ENCODE measurements at regions of chr2 and their contacts with region 1.

Region 1: GRCh38 chr2:84022810-84023431 is 436.2 kb downstream of the SUCLG1 start:
- DNase-seq: peak in 1 of 5 donors; percentile 8
- ATAC-seq: no peak
- H3K4me3 ChIP-seq: no peak overlapping the region
- H3K27ac ChIP-seq: no peak overlapping the region
- H3K4me1 ChIP-seq: no peaks in the 10 kb centered on the region
- H3K27me3 ChIP-seq: no peaks in the 10 kb centered on the region
- CTCF ChIP-seq: peak; percentile 33 to 69 (median 54)
- POLR2A ChIP-seq: no peak

Region 2: DNA sequence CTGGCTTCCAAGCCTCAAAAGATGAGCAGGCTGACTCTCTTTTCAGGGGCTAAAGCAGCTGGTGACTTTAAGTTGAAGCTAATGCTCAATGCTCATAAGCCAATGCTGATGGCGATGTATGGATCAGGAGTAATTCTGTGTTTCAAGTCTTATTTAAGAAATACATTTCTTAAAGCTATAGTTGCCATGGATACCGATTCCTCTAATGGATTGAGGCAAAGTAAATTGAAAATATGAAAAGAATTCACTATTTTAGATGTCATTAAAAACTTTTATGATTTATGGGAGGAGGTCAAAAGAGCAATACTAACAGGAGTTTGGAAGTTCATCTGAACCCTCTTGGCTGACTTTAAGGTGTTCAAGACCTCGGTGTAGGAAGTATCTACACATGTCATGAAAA is 45.7 kb after region 1 on chr2:
- intact Hi-C with region 1: no loop called
- DNase-seq: no peak
- ATAC-seq: no peak
- H3K4me3 ChIP-seq: no peak overlapping the region
- H3K27ac ChIP-seq: no peak overlapping the region
- H3K4me1 ChIP-seq: no peaks in the 10 kb centered on the region
- H3K27me3 ChIP-seq: no peaks in the 10 kb centered on the region
- CTCF ChIP-seq: no peak
- POLR2A ChIP-seq: no peak

Region 3: GRCh38 chr2:84212611-84213314 is 189.8 kb after region 1 on chr2:
- intact Hi-C with region 1: no loop called
- DNase-seq: no peak
- ATAC-seq: no peak
- H3K4me3 ChIP-seq: no peak overlapping the region
- H3K27ac ChIP-seq: no peak overlapping the region
- H3K4me1 ChIP-seq: no peaks in the 10 kb centered on the region
- H3K27me3 ChIP-seq: peaks cover 0 to 4% (median 0%) of the 10 kb centered on the region in 9 donors
- CTCF ChIP-seq: no peak
- POLR2A ChIP-seq: no peak

Region 4: DNA sequence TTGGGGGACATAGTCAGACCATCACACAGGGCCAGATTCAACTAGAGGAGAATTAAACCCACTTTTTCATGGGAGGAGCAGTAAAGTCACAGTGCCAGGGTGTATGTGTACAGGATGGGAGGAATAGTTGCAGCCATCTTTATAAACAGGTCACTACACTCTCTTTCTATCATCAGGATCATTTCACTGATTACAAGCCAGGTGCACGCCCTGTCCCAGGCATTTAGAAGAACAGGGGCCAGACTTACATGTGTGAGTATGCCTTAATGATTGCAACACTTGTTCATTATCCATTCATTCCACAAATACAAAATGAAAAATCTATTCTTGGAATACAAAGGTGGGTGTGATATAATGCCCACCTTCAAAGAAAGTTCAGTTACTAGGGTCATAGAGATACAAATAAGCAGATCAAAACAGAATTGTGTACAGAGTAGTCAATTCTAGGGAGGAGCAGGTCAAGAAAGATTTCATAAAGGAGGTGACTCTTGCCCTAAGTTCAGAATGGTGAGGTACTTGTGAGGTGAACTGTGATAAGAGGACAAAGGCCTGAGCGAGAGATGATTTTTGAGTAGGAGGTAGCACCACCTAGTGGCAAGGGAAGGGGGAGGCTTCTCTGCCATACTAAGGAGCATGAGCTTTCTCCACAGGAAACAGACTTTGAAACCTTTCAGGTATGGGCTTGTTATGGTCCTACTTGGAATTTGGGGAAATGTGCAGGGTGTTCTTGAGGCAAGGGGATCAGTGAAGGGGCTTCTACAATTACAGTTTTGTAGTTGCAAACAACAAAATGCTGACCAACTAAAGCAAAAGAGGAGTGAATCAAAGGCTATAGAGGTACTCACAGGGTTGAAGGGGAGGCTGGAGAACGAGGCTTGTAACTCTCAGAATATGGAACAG is 279.8 kb after region 1 on chr2:
- intact Hi-C with region 1: loop called (anchors 2 to 5 kb)
- DNase-seq: peak in 1 of 5 donors; percentile 8
- ATAC-seq: peak in 3 of 4 donors; percentile 62 to 65 (median 63)
- H3K4me3 ChIP-seq: no peak overlapping the region
- H3K27ac ChIP-seq: no peak overlapping the region
- H3K4me1 ChIP-seq: no peaks in the 10 kb centered on the region
- H3K27me3 ChIP-seq: peaks cover 0 to 5% (median 0%) of the 10 kb centered on the region in 9 donors
- CTCF ChIP-seq: peak; percentile 44 to 75 (median 68)
- POLR2A ChIP-seq: no peak

Region 5: GRCh38 chr2:84314901-84315330 is 292.0 kb after region 1 on chr2:
- intact Hi-C with region 1: loop called in 1 of 10 experiments (anchors 5 kb)
- DNase-seq: peak; percentile 61 to 81 (median 69)
- ATAC-seq: peak; percentile 82 to 92 (median 88)
- H3K4me3 ChIP-seq: no peak overlapping the region
- H3K27ac ChIP-seq: no peak overlapping the region
- H3K4me1 ChIP-seq: no peaks in the 10 kb centered on the region
- H3K27me3 ChIP-seq: peaks cover 0 to 26% (median 2%) of the 10 kb centered on the region in 9 donors
- CTCF ChIP-seq: peak; percentile 72 to 86 (median 80)
- POLR2A ChIP-seq: no peak